ENCODE measurements at regions of chr5 and their contacts with region 1.

Region 1: GRCh38 chr5:32489791-32490582 is 45.4 kb upstream of the ZFR start:
- DNase-seq: peak; percentile 80 to 89 (median 85)
- ATAC-seq: peak; percentile 62 to 81 (median 70)
- H3K4me3 ChIP-seq: peak overlapping the region in 1 of 12 donors; percentile 22
- H3K27ac ChIP-seq: no peak overlapping the region
- H3K4me1 ChIP-seq: peaks cover 0 to 11% (median 3%) of the 10 kb centered on the region in 12 donors
- H3K27me3 ChIP-seq: no peaks in the 10 kb centered on the region
- CTCF ChIP-seq: peak; percentile 69 to 85 (median 77)
- POLR2A ChIP-seq: no peak

Region 2: DNA sequence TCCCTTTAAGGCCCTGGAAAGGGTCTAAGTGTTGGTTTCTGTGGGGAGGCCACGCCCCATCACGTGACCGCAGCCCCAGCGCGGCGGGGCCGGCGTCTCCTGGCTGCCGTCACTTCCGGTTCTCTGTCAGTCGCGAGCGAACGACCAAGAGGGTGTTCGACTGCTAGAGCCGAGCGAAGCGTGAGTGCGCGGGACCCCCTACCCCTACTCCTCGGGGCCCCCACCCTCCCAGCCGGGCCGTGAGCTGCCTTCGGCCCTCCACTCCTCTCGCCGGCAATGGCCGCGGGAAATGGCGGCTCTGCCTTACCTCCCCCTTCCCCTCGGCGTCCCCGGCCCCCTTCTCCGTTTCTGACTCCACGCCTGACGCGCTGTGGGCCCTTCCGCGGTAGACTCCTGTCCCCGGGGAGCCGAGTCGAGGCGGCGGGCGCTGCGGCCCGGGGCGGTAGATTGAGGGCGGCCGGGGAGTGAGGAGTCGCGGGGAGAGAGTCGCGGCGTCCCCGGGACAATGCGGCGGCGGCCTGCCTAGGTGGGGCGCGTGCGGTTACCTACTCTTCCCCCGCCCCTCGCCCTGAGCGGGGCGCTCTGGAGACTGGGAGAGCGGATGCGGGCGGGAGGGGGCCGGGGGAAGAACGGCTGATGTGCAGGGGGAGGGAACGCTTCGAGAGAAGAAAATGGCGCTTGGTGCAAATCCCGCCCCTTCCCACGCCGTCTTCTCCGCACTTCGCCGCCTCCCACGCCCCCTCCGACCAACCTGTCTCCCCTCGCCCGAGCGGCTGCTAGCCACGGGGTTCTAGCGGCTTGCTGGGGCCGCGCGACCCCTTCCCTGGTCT is 95.7 kb after region 1 on chr5 and contains the start of gene SUB1:
- intact Hi-C with region 1: loop called (anchors 1 to 5 kb)
- DNase-seq: peak; percentile 95 to 97 (median 96)
- ATAC-seq: peak; percentile 92 to 96 (median 95)
- H3K4me3 ChIP-seq: peak within 1 kb of the TSS; percentile 85 to 98 (median 93)
- H3K27ac ChIP-seq: peak within 1 kb of the TSS; percentile 93 to 100 (median 99)
- H3K4me1 ChIP-seq: peaks cover 4 to 77% (median 14%) of the 10 kb centered on the region in 12 donors
- H3K27me3 ChIP-seq: no peaks in the 10 kb centered on the region
- CTCF ChIP-seq: peak in 2 of 12 donors; percentile 20 to 22
- POLR2A ChIP-seq: peak in 1 of 2 donors; percentile 69
- total RNA-seq, gene SUB1: 118 to 244 (median 197) TPM

Region 3: GRCh38 chr5:32916648-32917047 is 426.7 kb after region 1 on chr5:
- intact Hi-C with region 1: loop called in 2 of 10 experiments (anchors 10 kb)
- DNase-seq: peak in 1 of 5 donors; percentile 27
- ATAC-seq: peak in 2 of 4 donors; percentile 60 to 68
- H3K4me3 ChIP-seq: no peak overlapping the region
- H3K27ac ChIP-seq: no peak overlapping the region
- H3K4me1 ChIP-seq: peaks cover 0 to 3% (median 0%) of the 10 kb centered on the region in 12 donors
- H3K27me3 ChIP-seq: no peaks in the 10 kb centered on the region
- CTCF ChIP-seq: peak in 9 of 12 donors; percentile 8 to 51 (median 36)
- POLR2A ChIP-seq: no peak

Region 4: DNA sequence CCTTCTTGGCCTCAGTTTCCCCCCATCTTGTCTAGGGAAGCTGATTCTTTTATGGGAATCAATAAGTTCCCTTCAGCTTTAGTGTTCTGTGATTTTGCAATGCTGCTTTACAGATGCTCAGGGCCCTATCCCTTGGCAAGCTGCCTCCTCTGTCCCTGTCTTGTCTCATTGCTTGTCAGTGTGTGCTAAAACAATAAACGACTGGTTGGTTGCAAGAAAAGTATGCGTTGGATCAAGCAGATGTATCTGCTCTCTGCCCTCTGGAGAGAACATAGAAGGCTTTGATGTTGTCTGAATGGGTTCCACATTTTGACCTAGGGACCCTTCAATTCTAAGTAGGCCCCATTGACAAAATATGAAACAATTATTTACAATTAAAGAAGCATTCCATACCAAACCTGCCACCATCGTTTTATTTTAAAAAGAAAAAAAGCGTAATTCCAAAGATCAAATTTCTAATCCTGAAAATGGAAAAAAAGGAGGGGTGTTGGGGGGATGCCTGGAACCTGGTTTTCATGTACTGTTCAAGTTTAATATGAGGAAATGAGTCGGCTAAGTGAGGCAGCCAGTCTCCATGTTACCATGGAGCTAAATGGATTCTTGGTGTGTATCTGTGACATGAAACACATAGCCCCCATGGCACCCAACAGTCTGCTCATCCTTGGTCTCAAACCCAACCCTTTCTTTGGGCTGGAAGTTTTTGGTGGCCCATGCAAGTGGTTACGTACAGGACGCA is 919.6 kb after region 1 on chr5:
- intact Hi-C with region 1: loop called in 1 of 10 experiments (anchors 10 kb)
- DNase-seq: no peak
- ATAC-seq: no peak
- H3K4me3 ChIP-seq: no peak overlapping the region
- H3K27ac ChIP-seq: peak overlapping the region in 1 of 12 donors; percentile 78
- H3K4me1 ChIP-seq: no peaks in the 10 kb centered on the region
- H3K27me3 ChIP-seq: no peaks in the 10 kb centered on the region
- CTCF ChIP-seq: no peak
- POLR2A ChIP-seq: no peak

Measured in heart left ventricle (tissue), 16 donors.